CD8-positive, alpha-beta memory T cell (primary cell): ENCODE measurements at regions of chr11 and their contacts with region 1.

Region 1: GRCh38 chr11:46682773-46683752 is 17.4 kb downstream of the ARHGAP1 start:
- DNase-seq: no peak
- H3K4me3 ChIP-seq: no peak overlapping the region
- H3K4me3 Mint-ChIP-seq: no peak overlapping the region
- H3K27ac ChIP-seq: no peak overlapping the region
- H3K27ac Mint-ChIP-seq: peak overlapping the region in 2 of 8 donors; percentile 15 to 33
- H3K4me1 ChIP-seq: no peaks in the 10 kb centered on the region
- H3K4me1 Mint-ChIP-seq: peaks cover 3 to 17% (median 3%) of the 10 kb centered on the region in 3 donors
- H3K27me3 ChIP-seq: no peaks in the 10 kb centered on the region
- H3K27me3 Mint-ChIP-seq: no peaks in the 10 kb centered on the region

Region 2: GRCh38 chr11:46669711-46670139 is 13.3 kb before region 1 on chr11:
- CTCF ChIA-PET with region 1: interaction called, 19 read pairs
- POLR2A ChIA-PET with region 1: interaction called, 3 read pairs
- DNase-seq: peak in 1 of 5 donors; percentile 36
- H3K4me3 ChIP-seq: no peak overlapping the region
- H3K4me3 Mint-ChIP-seq: peak overlapping the region in 4 of 7 donors; percentile 18 to 58 (median 44)
- H3K27ac ChIP-seq: no peak overlapping the region
- H3K27ac Mint-ChIP-seq: peak overlapping the region; percentile 30 to 96 (median 72)
- H3K4me1 ChIP-seq: peaks cover 61% of the 10 kb centered on the region
- H3K4me1 Mint-ChIP-seq: peaks cover 41 to 53% (median 49%) of the 10 kb centered on the region in 3 donors
- H3K27me3 ChIP-seq: no peaks in the 10 kb centered on the region
- H3K27me3 Mint-ChIP-seq: no peaks in the 10 kb centered on the region

Region 3: GRCh38 chr11:46693597-46694012 is 10.5 kb after region 1 on chr11:
- CTCF ChIA-PET with region 1: no interaction called
- POLR2A ChIA-PET with region 1: no interaction called
- DNase-seq: no peak
- H3K4me3 ChIP-seq: no peak overlapping the region
- H3K4me3 Mint-ChIP-seq: no peak overlapping the region
- H3K27ac ChIP-seq: no peak overlapping the region
- H3K27ac Mint-ChIP-seq: peak overlapping the region in 1 of 8 donors; percentile 15
- H3K4me1 ChIP-seq: peaks cover 26% of the 10 kb centered on the region
- H3K4me1 Mint-ChIP-seq: peaks cover 27 to 47% (median 30%) of the 10 kb centered on the region in 3 donors
- H3K27me3 ChIP-seq: no peaks in the 10 kb centered on the region
- H3K27me3 Mint-ChIP-seq: peaks cover 0 to 1% of the 10 kb centered on the region in 2 donors